Posterior cingulate gyrus (tissue), 11 donors: ENCODE measurements at regions of chr7 and their contacts with region 1.

Region 1: GRCh38 chr7:140003913-140004382 is 58.8 kb downstream of the PARP12 start:
- DNase-seq: peak in 1 of 10 donors; percentile 37

Region 2: DNA sequence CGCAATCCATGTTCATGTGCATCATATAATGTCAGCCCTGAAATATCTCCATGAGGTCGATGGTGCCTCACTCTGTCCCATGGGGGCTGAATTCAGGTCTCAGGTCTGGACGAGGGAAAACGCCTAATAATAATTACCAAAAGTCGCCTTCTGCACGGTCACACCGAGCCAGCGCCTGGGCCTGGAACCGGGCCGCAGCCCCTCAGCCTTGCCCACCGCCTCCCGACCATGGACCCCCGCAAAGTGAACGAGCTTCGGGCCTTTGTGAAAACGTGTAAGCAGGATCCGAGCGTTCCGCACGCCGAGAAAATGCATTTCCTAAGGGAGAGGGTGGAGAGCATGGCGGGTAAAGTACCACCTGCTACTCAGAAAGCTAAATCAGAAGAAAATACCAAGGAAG is 501.7 kb before region 1 on chr7:
- intact Hi-C with region 1: loop called (anchors 1 kb)
- DNase-seq: peak in 1 of 10 donors; percentile 38

Region 3: DNA sequence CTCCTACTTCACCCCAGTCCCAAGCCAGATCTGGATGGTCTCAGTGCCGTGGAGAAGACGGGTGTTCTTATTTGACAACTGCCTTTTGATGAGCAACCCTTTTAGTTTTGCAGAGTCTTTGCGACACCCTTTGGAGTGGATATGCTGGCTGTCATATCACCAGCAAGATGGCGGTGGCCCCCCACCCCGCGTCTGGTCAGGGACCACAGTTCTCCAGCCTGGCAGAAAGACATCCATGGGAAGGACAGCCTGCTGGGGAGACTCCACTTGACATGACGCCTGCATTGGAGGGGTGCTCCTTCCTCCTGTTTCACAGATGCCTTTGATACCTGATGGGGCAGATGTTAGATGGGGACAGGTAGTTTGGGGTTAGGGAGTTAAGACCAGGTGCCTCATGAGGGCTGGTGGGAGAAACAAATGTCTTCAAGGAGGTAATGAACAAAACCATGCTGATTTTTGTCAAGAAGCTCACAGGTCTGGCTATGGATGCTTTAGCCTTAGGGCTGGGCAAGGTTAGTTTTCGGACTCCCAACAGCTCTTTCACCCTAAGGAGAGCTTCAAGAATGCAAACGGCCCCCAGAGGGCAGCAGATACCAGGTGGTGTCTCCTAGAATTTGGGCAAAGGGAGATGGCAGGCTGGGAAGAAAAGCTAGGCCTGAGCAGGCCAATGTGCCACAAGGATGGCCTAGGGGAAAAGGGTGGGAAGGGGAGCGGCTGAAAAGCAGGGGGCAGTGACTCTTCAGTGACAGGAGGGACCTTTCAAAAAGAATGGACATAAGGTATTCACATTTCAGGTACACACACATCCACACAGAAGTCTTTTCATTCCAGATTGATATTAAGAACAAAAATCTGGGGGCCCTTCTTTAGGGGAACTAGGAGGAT is 385.2 kb before region 1 on chr7:
- intact Hi-C with region 1: loop called (anchors 5 kb)
- DNase-seq: peak; percentile 31 to 94 (median 66)

Region 4: GRCh38 chr7:139777948-139778841 is 225.8 kb before region 1 on chr7 and contains the start of gene HIPK2:
- intact Hi-C with region 1: loop called (anchors 2 kb)
- DNase-seq: peak; percentile 64 to 96 (median 74)

Region 5: GRCh38 chr7:140304191-140304799 is 300.3 kb after region 1 on chr7:
- intact Hi-C with region 1: loop called (anchors 10 kb)
- DNase-seq: no peak